ENCODE measurements at regions of chr6 and their contacts with region 1.

Region 1: GRCh38 chr6:43608310-43608763 is 20.7 kb downstream of the GTPBP2 start:
- DNase-seq: peak; percentile 69
- H3K4me3 Mint-ChIP-seq: no peak overlapping the region
- H3K27ac Mint-ChIP-seq: no peak overlapping the region
- H3K4me1 Mint-ChIP-seq: peaks cover 3% of the 10 kb centered on the region
- H3K27me3 Mint-ChIP-seq: no peaks in the 10 kb centered on the region

Region 2: GRCh38 chr6:43635387-43636307 is 27.3 kb after region 1 on chr6 and contains the start of gene MAD2L1BP:
- CTCF ChIA-PET with region 1: interaction called, 10 read pairs
- POLR2A ChIA-PET with region 1: no interaction called
- intact Hi-C with region 1: no loop called
- DNase-seq: peak; percentile 94
- H3K4me3 Mint-ChIP-seq: peak within 1 kb of the TSS; percentile 99
- H3K27ac Mint-ChIP-seq: peak within 1 kb of the TSS; percentile 97
- H3K4me1 Mint-ChIP-seq: peaks cover 45% of the 10 kb centered on the region
- H3K27me3 Mint-ChIP-seq: no peaks in the 10 kb centered on the region
- total RNA-seq, gene MAD2L1BP: 29.1 to 31.6 TPM

Measured in activated CD4-positive, alpha-beta memory T cell treated with anti-CD3 and anti-CD28 coated beads for 36 hours (primary cell).